CD4-positive, alpha-beta memory T cell (primary cell): ENCODE measurements at regions of chr12 and their contacts with region 1.

Region 1: DNA sequence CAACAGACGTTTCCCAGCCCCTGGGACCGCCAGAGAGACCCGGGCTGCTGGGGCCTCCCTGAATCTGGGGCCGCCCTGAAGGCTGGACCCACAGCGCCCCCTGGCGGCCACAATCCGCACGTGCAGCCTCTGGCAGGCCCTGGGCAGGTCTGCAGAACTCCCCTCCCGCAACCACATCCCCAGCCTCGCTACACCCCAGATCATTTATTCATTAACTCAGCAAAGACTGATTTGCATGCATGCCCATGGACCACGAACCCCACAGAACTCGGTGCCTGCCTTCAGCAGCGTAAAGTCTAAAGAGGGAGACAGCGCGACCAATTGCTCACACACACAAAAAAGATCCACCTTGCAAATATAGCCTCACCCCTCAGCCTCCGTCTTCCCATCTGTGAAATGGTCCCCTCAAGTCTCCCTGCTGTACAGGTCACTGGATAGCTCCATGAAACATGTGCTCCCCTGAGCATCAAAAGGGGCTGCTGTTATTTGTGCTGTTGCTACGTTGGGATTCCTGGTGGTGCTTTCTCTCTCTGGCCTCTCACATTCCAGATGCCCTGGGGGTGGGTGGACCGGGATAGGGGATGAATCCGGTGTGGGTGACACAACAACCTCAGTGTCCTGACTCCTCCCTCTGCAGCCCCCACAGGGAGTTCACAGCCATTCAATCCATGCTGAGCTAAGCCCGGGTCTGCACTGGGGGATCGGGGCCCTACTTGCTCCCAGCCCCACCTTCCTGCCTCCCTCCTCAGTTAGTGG is 96.4 kb downstream of the SCARB1 start:
- DNase-seq: peak; percentile 75 to 81 (median 76)
- H3K4me3 ChIP-seq: no peak overlapping the region
- H3K4me3 Mint-ChIP-seq: peak overlapping the region in 2 of 8 donors; percentile 40 to 48
- H3K27ac ChIP-seq: no peak overlapping the region
- H3K27ac Mint-ChIP-seq: peak overlapping the region in 2 of 7 donors; percentile 10 to 74
- H3K4me1 ChIP-seq: peaks cover 9% of the 10 kb centered on the region
- H3K4me1 Mint-ChIP-seq: peaks cover 9 to 16% (median 12%) of the 10 kb centered on the region in 4 donors
- H3K27me3 ChIP-seq: no peaks in the 10 kb centered on the region
- H3K27me3 Mint-ChIP-seq: peaks cover 6 to 10% of the 10 kb centered on the region in 2 donors

Region 2: DNA sequence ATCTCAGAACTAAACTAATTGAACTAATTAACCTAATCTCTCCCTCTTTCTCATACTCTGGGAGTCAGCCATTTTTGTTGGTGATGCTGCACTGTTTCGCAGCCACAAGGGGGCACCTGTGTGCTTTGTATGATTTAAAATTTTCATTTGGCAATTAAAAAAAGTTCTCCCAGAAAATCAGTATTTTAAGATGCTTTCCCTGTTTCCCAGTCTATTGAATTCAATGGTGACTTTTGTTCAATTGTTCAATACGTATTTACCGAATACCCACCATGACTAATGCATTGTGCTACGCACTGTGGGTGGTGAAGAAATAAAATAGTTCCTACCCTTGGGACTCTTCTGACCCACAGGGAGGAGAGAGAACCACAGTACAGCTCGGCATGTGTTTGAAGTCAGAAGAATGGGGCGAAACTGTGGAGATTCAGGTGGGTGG is 730.6 kb before region 1 on chr12:
- CTCF ChIA-PET with region 1: interaction called, 119 read pairs
- POLR2A ChIA-PET with region 1: interaction called, 3 read pairs
- intact Hi-C with region 1: loop called (anchors 1 kb)
- DNase-seq: peak in 4 of 5 donors; percentile 35 to 45 (median 42)
- H3K4me3 ChIP-seq: no peak overlapping the region
- H3K4me3 Mint-ChIP-seq: no peak overlapping the region
- H3K27ac ChIP-seq: no peak overlapping the region
- H3K27ac Mint-ChIP-seq: no peak overlapping the region
- H3K4me1 ChIP-seq: no peaks in the 10 kb centered on the region
- H3K4me1 Mint-ChIP-seq: no peaks in the 10 kb centered on the region
- H3K27me3 ChIP-seq: no peaks in the 10 kb centered on the region
- H3K27me3 Mint-ChIP-seq: peaks cover 4% of the 10 kb centered on the region in 2 donors

Region 3: GRCh38 chr12:124347716-124348357 is 419.4 kb before region 1 on chr12:
- CTCF ChIA-PET with region 1: interaction called, 21 read pairs
- POLR2A ChIA-PET with region 1: no interaction called
- intact Hi-C with region 1: no loop called
- DNase-seq: peak in 2 of 5 donors; percentile 8 to 15
- H3K4me3 ChIP-seq: no peak overlapping the region
- H3K4me3 Mint-ChIP-seq: no peak overlapping the region
- H3K27ac ChIP-seq: no peak overlapping the region
- H3K27ac Mint-ChIP-seq: peak overlapping the region in 1 of 7 donors; percentile 12
- H3K4me1 ChIP-seq: no peaks in the 10 kb centered on the region
- H3K4me1 Mint-ChIP-seq: peaks cover 0 to 4% (median 0%) of the 10 kb centered on the region in 4 donors
- H3K27me3 ChIP-seq: no peaks in the 10 kb centered on the region
- H3K27me3 Mint-ChIP-seq: no peaks in the 10 kb centered on the region

Region 4: GRCh38 chr12:124453419-124454351 is 313.6 kb before region 1 on chr12:
- CTCF ChIA-PET with region 1: interaction called, 3 read pairs
- POLR2A ChIA-PET with region 1: no interaction called
- intact Hi-C with region 1: loop called (anchors 10 kb)
- DNase-seq: peak; percentile 74 to 96 (median 76)
- H3K4me3 ChIP-seq: peak overlapping the region in 1 of 2 donors; percentile 46
- H3K4me3 Mint-ChIP-seq: peak overlapping the region; percentile 52 to 81 (median 70)
- H3K27ac ChIP-seq: peak overlapping the region; percentile 67
- H3K27ac Mint-ChIP-seq: peak overlapping the region; percentile 82 to 93 (median 88)
- H3K4me1 ChIP-seq: peaks cover 76% of the 10 kb centered on the region
- H3K4me1 Mint-ChIP-seq: peaks cover 26 to 75% (median 54%) of the 10 kb centered on the region in 4 donors
- H3K27me3 ChIP-seq: no peaks in the 10 kb centered on the region
- H3K27me3 Mint-ChIP-seq: no peaks in the 10 kb centered on the region

Region 5: GRCh38 chr12:124754949-124755800 is 12.1 kb before region 1 on chr12:
- CTCF ChIA-PET with region 1: interaction called, 20 read pairs
- POLR2A ChIA-PET with region 1: no interaction called
- intact Hi-C with region 1: no loop called
- DNase-seq: no peak
- H3K4me3 ChIP-seq: no peak overlapping the region
- H3K4me3 Mint-ChIP-seq: peak overlapping the region in 4 of 8 donors; percentile 7 to 61 (median 35)
- H3K27ac ChIP-seq: no peak overlapping the region
- H3K27ac Mint-ChIP-seq: peak overlapping the region in 2 of 7 donors; percentile 23 to 73
- H3K4me1 ChIP-seq: no peaks in the 10 kb centered on the region
- H3K4me1 Mint-ChIP-seq: peaks cover 3 to 10% (median 7%) of the 10 kb centered on the region in 4 donors
- H3K27me3 ChIP-seq: no peaks in the 10 kb centered on the region
- H3K27me3 Mint-ChIP-seq: peaks cover 2% of the 10 kb centered on the region in 2 donors

Region 6: DNA sequence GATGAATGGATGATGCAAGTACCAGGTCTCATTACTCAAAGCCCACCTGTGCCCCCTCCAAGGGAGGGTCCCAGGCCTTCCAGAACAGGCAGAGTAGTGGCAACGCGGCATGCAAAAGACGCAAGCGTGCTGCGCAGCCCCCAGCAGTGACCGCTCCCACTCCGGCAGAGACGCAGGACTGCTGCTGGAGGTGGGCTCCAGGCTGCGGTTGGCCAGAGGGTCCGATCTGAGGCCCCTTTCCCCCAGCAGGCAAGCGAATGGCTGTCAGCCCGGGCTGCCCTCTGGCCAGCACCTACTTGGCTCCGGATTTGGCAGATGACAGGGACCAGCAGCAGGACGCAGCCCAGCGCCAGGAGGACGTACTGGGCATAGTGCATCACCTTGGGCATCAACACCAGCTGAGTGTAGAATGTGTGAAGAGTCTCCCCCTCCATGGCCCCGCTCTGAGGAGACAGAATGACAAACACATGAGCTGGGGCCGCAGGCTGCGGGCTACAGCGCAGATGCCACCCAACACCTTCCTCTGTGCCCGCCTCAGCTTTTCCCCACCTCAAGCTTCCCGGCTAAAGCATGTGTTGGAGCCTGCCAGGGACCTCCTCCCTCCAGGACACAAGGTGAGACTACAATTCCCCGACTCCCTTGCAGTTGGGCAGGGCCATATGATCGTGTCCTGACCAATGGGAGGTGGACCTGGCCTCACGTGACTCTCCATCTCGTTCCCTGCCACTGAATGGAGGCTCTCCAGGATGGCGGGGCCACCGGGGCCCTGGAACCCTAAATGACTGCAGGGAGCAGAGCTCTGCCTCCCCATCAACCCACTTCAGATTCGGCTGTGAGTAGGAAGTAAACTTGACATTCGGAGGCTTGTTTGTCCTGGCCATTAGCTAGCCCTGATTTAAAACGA is 19.1 kb after region 1 on chr12:
- CTCF ChIA-PET with region 1: interaction called, 12 read pairs
- POLR2A ChIA-PET with region 1: no interaction called
- intact Hi-C with region 1: no loop called
- DNase-seq: no peak
- H3K4me3 ChIP-seq: no peak overlapping the region
- H3K4me3 Mint-ChIP-seq: no peak overlapping the region
- H3K27ac ChIP-seq: no peak overlapping the region
- H3K27ac Mint-ChIP-seq: no peak overlapping the region
- H3K4me1 ChIP-seq: no peaks in the 10 kb centered on the region
- H3K4me1 Mint-ChIP-seq: no peaks in the 10 kb centered on the region
- H3K27me3 ChIP-seq: no peaks in the 10 kb centered on the region
- H3K27me3 Mint-ChIP-seq: no peaks in the 10 kb centered on the region

Region 7: DNA sequence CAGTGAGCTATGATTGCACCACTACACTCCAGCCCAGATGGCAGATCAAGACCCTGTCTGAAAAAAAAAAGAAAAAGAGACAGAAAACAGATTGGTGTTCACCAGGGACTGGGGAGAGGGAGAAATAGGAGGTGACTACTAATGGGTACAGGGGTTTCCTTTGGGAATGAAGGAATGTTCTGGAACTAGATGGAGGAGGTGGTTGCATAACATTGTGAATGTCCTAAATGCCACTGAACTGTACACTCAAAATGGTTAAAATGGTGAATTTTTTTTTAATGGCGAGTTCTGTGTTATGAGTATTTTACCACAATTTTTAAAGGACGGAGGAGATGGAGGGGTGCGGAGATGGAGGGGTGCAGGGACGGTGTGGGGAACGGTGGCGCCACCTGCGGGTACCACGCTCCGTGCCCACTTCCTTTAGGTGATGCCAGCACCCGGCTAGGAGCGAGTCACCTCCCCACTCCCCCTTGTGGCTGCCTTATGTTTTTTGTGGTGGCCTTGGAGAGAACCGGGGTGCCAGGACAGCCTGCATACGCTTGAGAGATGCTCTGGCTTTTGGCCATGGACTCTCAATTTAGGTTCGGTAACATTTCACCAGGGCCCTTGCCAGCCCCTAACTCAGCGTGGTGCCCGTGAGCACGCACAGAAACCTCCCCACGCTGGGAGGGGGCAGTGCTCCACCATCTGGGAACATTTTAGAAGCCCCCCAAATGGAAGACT is 131.1 kb after region 1 on chr12:
- CTCF ChIA-PET with region 1: no interaction called
- POLR2A ChIA-PET with region 1: no interaction called
- intact Hi-C with region 1: no loop called
- DNase-seq: peak; percentile 62 to 76 (median 67)
- H3K4me3 ChIP-seq: no peak overlapping the region
- H3K4me3 Mint-ChIP-seq: peak overlapping the region; percentile 39 to 74 (median 56)
- H3K27ac ChIP-seq: no peak overlapping the region
- H3K27ac Mint-ChIP-seq: peak overlapping the region in 3 of 7 donors; percentile 28 to 55 (median 49)
- H3K4me1 ChIP-seq: peaks cover 9% of the 10 kb centered on the region
- H3K4me1 Mint-ChIP-seq: peaks cover 9 to 17% (median 12%) of the 10 kb centered on the region in 4 donors
- H3K27me3 ChIP-seq: no peaks in the 10 kb centered on the region
- H3K27me3 Mint-ChIP-seq: no peaks in the 10 kb centered on the region